Activated CD4-positive, alpha-beta memory T cell treated with anti-CD3 and anti-CD28 coated beads for 36 hours (primary cell): ENCODE measurements at regions of chr15 and their contacts with region 1.

Region 1: GRCh38 chr15:41557673-41558399 is 1.2 kb upstream of the TYRO3 start:
- DNase-seq: peak; percentile 83
- H3K4me3 Mint-ChIP-seq: peak overlapping the region; percentile 82
- H3K27ac Mint-ChIP-seq: peak overlapping the region; percentile 70
- H3K4me1 Mint-ChIP-seq: peaks cover 17% of the 10 kb centered on the region
- H3K27me3 Mint-ChIP-seq: peaks cover 17% of the 10 kb centered on the region

Region 2: DNA sequence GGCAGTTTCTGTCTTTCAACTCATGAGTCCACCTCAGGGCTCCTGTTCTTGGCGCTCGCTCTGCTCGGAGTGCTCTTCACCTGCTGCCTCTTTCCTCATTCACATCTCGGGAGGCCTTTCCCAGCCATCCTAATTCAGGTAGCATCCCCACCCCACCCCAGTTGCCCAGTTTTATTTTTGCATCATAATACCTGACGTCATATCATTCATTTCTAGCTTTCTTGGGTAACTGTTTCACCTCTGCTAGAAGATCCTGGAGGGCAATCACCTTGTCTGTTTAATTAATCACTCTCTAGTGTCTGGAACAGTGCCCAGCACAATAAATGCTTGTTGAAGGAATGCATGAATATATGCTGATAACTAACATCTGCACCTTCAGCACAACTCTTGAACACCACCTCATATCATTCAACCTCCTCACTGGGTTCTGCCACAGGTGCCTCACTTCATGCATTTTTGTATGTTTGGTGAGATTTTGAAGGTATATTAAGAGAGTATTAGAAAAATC is 217.6 kb before region 1 on chr15:
- CTCF ChIA-PET with region 1: no interaction called
- POLR2A ChIA-PET with region 1: no interaction called
- intact Hi-C with region 1: no loop called
- DNase-seq: no peak
- H3K4me3 Mint-ChIP-seq: peak overlapping the region; percentile 10
- H3K27ac Mint-ChIP-seq: no peak overlapping the region
- H3K4me1 Mint-ChIP-seq: peaks cover 28% of the 10 kb centered on the region
- H3K27me3 Mint-ChIP-seq: no peaks in the 10 kb centered on the region

Region 3: DNA sequence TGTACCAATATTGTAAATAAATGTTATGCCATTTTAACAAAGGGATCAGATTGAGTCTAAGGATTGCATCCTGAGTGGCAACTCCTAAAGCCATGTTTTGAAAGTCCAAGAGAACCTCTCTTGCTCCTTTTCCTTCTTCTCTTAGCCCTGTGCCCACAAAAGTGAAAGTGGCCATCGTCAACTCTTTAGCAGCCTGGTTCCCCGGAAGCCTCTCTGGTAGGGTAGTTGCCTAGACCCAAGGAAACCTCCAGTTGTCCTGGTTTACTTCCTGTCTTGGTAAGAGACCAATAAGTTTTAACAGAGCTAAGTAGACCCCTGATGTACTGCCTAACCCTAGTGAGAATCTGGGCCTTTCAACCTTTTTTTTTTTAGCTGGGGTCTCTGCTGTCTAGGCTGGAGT is 74.3 kb before region 1 on chr15:
- CTCF ChIA-PET with region 1: no interaction called
- POLR2A ChIA-PET with region 1: no interaction called
- intact Hi-C with region 1: no loop called
- DNase-seq: peak; percentile 48
- H3K4me3 Mint-ChIP-seq: peak overlapping the region; percentile 21
- H3K27ac Mint-ChIP-seq: peak overlapping the region; percentile 71
- H3K4me1 Mint-ChIP-seq: peaks cover 23% of the 10 kb centered on the region
- H3K27me3 Mint-ChIP-seq: no peaks in the 10 kb centered on the region

Region 4: DNA sequence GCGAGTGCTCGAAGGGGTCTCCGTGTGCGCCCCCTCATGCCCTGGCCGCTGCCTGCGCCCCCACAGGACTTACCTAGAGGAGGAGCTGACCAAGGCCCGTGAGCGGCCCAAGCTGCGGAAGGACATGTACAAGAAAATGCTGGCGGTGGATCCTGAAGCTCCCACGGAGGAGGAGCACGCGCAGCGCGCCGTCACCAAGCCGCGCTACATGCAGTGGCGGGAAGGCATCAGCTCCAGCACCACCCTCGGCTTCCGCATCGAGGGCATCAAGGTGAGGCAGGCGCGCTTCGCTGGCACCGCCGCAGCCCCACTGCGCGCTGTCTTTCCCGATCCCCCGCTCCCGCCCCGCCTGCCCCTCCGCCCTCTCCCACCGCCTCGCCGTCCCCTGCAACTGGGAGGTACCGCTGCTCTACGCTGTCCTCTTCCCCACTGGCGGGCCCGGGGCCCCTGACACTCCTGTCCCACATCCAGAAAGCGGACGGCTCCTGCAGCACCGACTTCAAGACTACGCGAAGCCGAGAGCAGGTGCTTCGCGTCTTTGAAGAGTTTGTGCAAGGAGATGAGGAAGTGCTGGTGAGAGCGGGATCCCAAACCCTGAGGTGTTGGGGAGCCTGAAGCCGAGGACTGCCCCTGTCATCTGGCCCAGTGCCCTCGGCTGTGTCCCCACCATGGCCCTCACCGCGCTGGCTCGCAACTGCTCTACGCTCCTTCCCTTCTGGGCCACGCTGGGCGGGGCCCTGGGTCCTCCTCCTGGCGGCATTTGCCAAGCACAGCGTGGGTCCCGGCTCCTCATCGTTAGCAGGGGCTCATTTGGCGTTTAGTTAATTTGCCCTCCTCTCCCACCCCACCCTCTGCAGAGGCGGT is 55.7 kb before region 1 on chr15:
- CTCF ChIA-PET with region 1: interaction called, 3 read pairs
- POLR2A ChIA-PET with region 1: no interaction called
- intact Hi-C with region 1: loop called (anchors 5 kb)
- DNase-seq: peak; percentile 63
- H3K4me3 Mint-ChIP-seq: peak overlapping the region; percentile 35
- H3K27ac Mint-ChIP-seq: no peak overlapping the region
- H3K4me1 Mint-ChIP-seq: peaks cover 19% of the 10 kb centered on the region
- H3K27me3 Mint-ChIP-seq: peaks cover 39% of the 10 kb centered on the region

Region 5: DNA sequence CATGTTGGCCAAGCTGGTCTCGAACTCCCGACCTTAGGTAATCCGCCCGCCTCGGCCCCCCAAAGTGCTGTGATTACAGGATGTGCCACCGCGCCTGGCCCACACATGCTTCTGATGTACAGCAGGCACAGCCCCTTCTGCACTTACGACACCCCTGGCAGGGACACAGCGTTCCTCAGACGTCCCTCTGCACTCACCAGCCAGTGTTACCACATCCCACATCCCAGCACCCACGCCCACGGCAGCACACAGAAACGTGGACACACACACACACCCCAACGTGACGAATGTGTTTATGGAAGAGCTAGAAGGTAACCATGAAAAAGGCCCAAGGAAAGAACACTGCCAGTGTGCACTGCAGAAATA is 13.2 kb before region 1 on chr15:
- CTCF ChIA-PET with region 1: interaction called, 11 read pairs
- POLR2A ChIA-PET with region 1: interaction called, 3 read pairs
- intact Hi-C with region 1: no loop called
- DNase-seq: no peak
- H3K4me3 Mint-ChIP-seq: peak overlapping the region; percentile 95
- H3K27ac Mint-ChIP-seq: no peak overlapping the region
- H3K4me1 Mint-ChIP-seq: peaks cover 8% of the 10 kb centered on the region
- H3K27me3 Mint-ChIP-seq: no peaks in the 10 kb centered on the region

Region 6: GRCh38 chr15:41585127-41586047 is 27.6 kb after region 1 on chr15:
- CTCF ChIA-PET with region 1: interaction called, 10 read pairs
- POLR2A ChIA-PET with region 1: no interaction called
- intact Hi-C with region 1: no loop called
- DNase-seq: peak; percentile 59
- H3K4me3 Mint-ChIP-seq: peak overlapping the region; percentile 57
- H3K27ac Mint-ChIP-seq: no peak overlapping the region
- H3K4me1 Mint-ChIP-seq: peaks cover 7% of the 10 kb centered on the region
- H3K27me3 Mint-ChIP-seq: peaks cover 20% of the 10 kb centered on the region

Region 7: DNA sequence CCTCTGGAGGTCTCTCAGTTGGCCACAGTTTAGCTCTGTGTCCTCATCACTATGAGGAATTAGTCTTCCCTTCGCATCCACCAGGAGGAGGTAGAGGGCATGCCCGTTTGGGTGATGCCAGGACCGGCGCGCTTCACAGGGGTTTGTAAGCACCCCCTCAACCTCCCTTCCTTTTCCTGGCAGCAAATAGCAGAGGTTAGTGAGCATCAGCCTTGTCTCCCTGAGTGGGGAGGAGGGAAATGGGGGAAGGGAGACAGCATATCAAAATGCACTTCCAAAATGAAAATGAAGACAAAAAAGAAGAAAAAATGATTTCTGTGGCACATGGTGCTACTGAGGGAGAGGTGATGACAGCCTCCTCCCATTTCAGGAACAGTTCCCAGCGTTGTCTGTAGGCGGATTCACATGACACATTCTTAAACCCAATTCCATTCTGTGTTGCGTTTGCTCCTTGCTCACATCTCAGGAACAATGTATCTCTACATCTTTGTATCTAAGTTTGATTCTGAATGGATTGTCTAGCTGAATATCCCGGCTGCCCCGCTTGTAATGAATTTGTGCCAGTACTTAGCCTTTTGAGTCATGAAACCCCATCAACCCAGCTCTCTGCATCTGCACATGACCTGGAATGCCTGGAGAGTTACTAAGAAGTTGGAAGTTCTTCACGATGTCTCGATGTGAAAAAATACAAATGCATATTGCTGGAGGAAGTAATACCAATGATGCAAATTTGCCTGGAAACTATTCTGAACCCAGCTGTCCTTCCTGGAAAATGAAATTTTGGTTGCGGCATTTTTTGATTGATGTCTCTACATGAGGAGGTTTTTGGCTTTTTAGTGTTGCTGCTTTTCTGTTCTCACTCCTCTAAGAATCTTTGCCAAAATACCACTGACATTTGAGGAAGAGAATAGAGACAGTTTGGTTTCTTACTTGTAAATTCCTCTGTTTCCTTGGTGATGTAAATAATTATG is 46.4 kb after region 1 on chr15:
- CTCF ChIA-PET with region 1: interaction called, 23 read pairs
- POLR2A ChIA-PET with region 1: no interaction called
- intact Hi-C with region 1: loop called (anchors 5 kb)
- DNase-seq: peak; percentile 64
- H3K4me3 Mint-ChIP-seq: peak overlapping the region; percentile 60
- H3K27ac Mint-ChIP-seq: no peak overlapping the region
- H3K4me1 Mint-ChIP-seq: peaks cover 11% of the 10 kb centered on the region
- H3K27me3 Mint-ChIP-seq: peaks cover 10% of the 10 kb centered on the region

Region 8: DNA sequence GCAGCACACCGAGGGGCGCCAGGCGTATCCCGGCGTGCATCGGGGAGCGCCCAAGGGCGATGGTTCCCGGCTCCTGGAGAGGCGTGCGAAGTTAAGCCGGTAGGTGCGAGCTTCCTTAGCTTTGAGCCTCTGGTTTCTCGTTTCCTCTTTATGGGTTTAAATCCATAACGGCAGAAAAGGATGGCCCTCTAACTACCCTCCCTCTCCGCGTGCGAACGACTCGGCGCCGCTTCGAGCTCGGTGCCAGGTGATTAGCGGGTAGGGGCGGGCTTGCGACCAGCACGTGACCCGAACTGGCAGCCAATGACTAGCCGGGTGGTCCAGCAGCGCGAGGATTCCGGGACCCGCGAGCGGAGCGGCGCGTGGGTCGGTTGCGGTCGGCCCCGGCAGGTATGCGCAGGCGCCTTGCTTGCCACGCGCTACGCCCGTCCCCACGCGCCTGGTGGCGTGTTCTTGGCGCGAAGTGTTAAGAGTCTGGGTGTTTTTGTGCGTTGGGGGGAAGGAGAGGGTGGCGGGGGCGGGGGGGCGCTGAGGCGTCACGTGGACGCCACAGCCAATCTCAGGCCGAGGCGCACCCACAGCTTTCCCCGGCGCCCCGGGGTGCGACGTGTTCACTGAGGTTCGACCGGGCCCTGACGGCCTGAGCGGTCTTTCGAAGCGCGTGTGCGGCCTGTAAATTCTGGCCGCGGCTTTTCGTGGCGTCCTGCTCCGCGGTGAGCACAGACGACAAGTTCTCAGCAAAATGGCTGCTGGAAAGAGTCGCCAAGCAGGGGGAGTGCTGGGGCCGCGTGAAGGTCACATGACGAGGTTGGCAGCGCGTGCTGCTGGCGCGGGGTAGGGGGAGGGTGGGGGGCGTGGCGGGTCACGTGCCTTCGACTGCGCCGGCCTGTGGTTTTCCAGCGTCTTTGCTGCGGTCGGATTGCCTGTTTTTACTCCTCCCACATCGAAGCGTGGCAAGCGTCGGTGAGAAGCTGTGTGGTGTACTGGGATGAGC is 63.7 kb after region 1 on chr15:
- CTCF ChIA-PET with region 1: interaction called, 3 read pairs
- POLR2A ChIA-PET with region 1: no interaction called
- intact Hi-C with region 1: loop called (anchors 5 kb)
- DNase-seq: peak; percentile 90
- H3K4me3 Mint-ChIP-seq: peak overlapping the region; percentile 76
- H3K27ac Mint-ChIP-seq: peak overlapping the region; percentile 69
- H3K4me1 Mint-ChIP-seq: peaks cover 16% of the 10 kb centered on the region
- H3K27me3 Mint-ChIP-seq: no peaks in the 10 kb centered on the region

Region 9: DNA sequence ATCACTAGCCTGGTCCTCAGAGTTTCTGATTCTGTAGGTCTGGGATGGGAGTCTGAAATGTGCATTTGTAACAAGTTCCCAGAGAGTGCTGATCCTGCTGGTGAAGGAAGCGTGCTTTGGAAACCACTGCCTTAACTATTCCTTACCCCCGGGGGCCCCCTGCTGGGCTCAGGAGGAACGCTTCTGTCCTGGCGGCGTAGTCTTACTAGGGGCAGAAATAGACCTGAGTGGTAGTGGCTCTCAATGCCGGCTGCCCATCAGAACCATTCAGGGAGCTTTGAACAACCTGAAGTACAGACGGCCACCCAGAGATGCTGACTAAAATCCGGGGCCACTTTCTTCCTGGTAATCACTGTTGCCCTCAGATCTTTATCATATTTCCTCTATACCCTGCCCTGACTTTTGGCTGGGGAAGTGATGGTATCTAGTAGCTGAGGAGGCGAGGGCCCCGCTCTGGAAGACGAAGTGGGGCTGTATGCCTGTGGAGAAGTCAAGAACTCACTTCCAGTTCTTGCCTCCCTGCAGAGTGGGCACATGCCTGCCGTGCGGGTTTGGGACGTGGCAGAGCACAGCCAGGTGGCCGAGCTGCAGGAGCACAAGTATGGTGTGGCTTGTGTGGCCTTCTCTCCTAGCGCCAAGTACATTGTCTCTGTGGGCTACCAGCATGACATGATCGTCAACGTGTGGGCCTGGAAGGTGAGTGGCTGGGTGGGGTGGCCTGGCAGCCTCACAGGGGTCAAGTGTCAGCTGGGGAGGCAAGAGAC is 253.8 kb after region 1 on chr15:
- CTCF ChIA-PET with region 1: interaction called, 25 read pairs
- POLR2A ChIA-PET with region 1: no interaction called
- intact Hi-C with region 1: loop called (anchors 1 kb)
- DNase-seq: peak; percentile 84
- H3K4me3 Mint-ChIP-seq: no peak overlapping the region
- H3K27ac Mint-ChIP-seq: no peak overlapping the region
- H3K4me1 Mint-ChIP-seq: peaks cover 10% of the 10 kb centered on the region
- H3K27me3 Mint-ChIP-seq: no peaks in the 10 kb centered on the region

Region 10: DNA sequence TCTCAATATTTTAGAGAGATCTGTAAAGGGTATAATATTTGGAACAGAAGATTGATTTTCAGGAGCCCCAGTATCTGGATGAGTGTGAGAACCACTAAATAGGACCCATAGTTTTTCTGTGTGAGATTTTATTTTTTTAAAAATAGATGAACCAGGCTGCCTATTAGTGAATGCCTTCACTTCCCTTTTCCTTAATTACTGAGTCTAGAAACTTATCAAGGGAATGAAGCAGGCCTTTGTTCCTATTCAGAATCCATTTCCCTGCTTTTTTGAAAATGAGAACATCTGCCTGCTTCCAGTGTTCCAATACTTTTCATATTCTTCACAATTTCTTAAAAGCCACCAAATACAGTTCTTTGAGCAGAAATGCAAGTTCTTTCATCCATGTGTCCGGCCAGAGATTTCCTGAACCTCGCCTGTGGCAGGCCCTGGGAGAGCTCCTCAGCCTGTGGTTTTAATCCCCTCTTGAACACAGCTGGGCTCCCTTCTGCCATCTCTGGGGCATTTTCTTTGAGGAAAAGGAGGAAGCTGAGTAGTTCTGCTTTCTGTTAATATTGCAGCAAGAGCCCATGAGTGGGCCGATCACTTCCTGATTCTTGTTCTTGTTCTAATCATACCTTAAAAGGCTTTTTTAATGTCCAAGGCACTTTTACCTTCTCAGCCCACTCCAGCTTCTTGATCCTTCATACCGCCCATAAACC is 409.8 kb after region 1 on chr15:
- CTCF ChIA-PET with region 1: no interaction called
- POLR2A ChIA-PET with region 1: no interaction called
- intact Hi-C with region 1: no loop called
- DNase-seq: no peak
- H3K4me3 Mint-ChIP-seq: peak overlapping the region; percentile 20
- H3K27ac Mint-ChIP-seq: peak overlapping the region; percentile 66
- H3K4me1 Mint-ChIP-seq: peaks cover 58% of the 10 kb centered on the region
- H3K27me3 Mint-ChIP-seq: no peaks in the 10 kb centered on the region